ENCODE measurements at regions of chr11 and their contacts with region 1.

Region 1: GRCh38 chr11:68020575-68020974 is 9.9 kb upstream of the NDUFS8 start:
- DNase-seq: no peak
- H3K4me3 ChIP-seq: no peak overlapping the region
- H3K27ac ChIP-seq: no peak overlapping the region
- H3K4me1 ChIP-seq: peaks cover 12% of the 10 kb centered on the region
- H3K27me3 ChIP-seq: no peaks in the 10 kb centered on the region
- CTCF ChIP-seq: peak; percentile 8 to 41

Region 2: GRCh38 chr11:68003846-68004550 is 16.6 kb before region 1 on chr11 and contains the start of gene UNC93B1:
- CTCF ChIA-PET with region 1: interaction called, 7 read pairs
- dilution Hi-C with region 1: no loop called
- in situ Hi-C with region 1: no loop called
- intact Hi-C with region 1: loop called (anchors 1 kb)
- DNase-seq: peak; percentile 78
- H3K4me3 ChIP-seq: peak within 1 kb of the TSS; percentile 52 to 65 (median 62)
- H3K27ac ChIP-seq: no peak within 1 kb of the TSS
- H3K4me1 ChIP-seq: peaks cover 21% of the 10 kb centered on the region
- H3K27me3 ChIP-seq: no peaks in the 10 kb centered on the region
- CTCF ChIP-seq: no peak
- total RNA-seq, gene UNC93B1: 20.7 to 22.0 TPM

Region 3: GRCh38 chr11:68076371-68077042 is 55.9 kb after region 1 on chr11:
- CTCF ChIA-PET with region 1: no interaction called
- dilution Hi-C with region 1: loop called (anchors 5 kb)
- in situ Hi-C with region 1: no loop called
- intact Hi-C with region 1: no loop called
- DNase-seq: no peak
- H3K4me3 ChIP-seq: no peak overlapping the region
- H3K27ac ChIP-seq: no peak overlapping the region
- H3K4me1 ChIP-seq: peaks cover 12% of the 10 kb centered on the region
- H3K27me3 ChIP-seq: no peaks in the 10 kb centered on the region
- CTCF ChIP-seq: no peak

Measured in mammary epithelial cell (primary cell).